ENCODE measurements at regions of chr6 and their contacts with region 1.

Region 1: DNA sequence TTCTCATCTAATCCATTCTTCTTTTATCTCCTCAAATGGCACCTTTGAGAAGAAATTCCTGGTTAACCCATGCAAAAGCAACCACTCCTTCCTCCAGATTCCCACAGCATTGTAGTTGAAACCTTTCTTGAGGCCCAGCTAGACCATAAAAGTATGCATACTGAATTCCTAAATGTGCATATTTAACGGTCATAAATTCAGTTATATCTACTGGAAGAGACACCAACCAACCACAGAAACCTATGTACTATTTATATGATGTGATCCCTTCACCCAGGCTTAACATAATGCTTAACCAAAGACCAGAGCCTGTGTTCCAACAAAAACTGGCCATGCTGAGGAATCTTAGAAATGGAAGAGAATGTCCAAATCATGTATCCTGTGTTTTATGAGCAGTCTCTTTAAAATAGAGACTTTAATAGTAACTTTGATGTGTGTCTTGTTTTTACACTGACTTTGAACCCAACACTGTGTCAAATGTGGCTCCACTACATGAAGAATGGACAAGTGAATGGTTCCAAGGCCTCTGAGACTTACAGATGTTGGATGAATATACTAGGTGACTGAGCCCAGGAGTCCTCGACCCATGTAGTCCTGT is 11.4 kb upstream of the TAF8 start:
- DNase-seq: no peak
- ATAC-seq: no peak
- H3K4me3 ChIP-seq: peak overlapping the region in 3 of 5 experiments; percentile 23 to 35 (median 30)
- H3K4me3 Mint-ChIP-seq: peak overlapping the region; percentile 74
- H3K27ac ChIP-seq: peak overlapping the region; percentile 22 to 79
- H3K27ac Mint-ChIP-seq: peak overlapping the region; percentile 92
- H3K4me1 ChIP-seq: peaks cover 37 to 48% of the 10 kb centered on the region in 2 donors
- H3K4me1 Mint-ChIP-seq: peaks cover 50% of the 10 kb centered on the region
- H3K27me3 ChIP-seq: no peaks in the 10 kb centered on the region
- H3K27me3 Mint-ChIP-seq: no peaks in the 10 kb centered on the region
- CTCF ChIP-seq: no peak

Region 2: DNA sequence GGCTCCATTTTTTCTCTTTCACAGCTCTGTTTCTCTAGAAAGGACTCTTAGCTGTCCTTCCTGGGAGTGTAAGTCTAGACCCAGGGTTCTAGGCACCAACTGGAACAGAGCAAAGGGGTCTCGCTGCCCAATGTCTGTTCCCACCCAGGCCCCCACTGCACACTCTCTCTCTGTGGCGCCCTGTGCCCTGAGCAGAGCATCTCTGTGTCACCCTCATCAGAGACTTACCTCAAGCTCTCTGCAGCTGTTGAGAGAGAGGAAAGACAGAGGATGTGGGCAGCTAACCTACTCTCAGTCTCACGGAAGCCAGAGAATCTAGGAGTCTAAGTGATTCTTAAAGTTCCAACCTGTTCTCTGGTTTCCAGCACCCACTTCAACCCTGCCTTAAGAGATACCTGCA is 694.0 kb before region 1 on chr6:
- CTCF ChIA-PET with region 1: no interaction called
- POLR2A ChIA-PET with region 1: no interaction called
- intact Hi-C with region 1: no loop called
- DNase-seq: no peak
- ATAC-seq: no peak
- H3K4me3 ChIP-seq: no peak overlapping the region
- H3K4me3 Mint-ChIP-seq: no peak overlapping the region
- H3K27ac ChIP-seq: no peak overlapping the region
- H3K27ac Mint-ChIP-seq: no peak overlapping the region
- H3K4me1 ChIP-seq: peaks cover 3 to 4% of the 10 kb centered on the region in 2 donors
- H3K4me1 Mint-ChIP-seq: peaks cover 4% of the 10 kb centered on the region
- H3K27me3 ChIP-seq: peaks cover 0 to 10% (median 7%) of the 10 kb centered on the region in 4 experiments
- H3K27me3 Mint-ChIP-seq: peaks cover 27% of the 10 kb centered on the region
- CTCF ChIP-seq: no peak

Region 3: GRCh38 chr6:41996997-41997396 is 41.9 kb before region 1 on chr6:
- CTCF ChIA-PET with region 1: interaction called, 10 read pairs
- POLR2A ChIA-PET with region 1: no interaction called
- intact Hi-C with region 1: no loop called
- DNase-seq: no peak
- ATAC-seq: no peak
- H3K4me3 ChIP-seq: no peak overlapping the region
- H3K4me3 Mint-ChIP-seq: no peak overlapping the region
- H3K27ac ChIP-seq: no peak overlapping the region
- H3K27ac Mint-ChIP-seq: peak overlapping the region; percentile 0
- H3K4me1 ChIP-seq: no peaks in the 10 kb centered on the region
- H3K4me1 Mint-ChIP-seq: peaks cover 10% of the 10 kb centered on the region
- H3K27me3 ChIP-seq: no peaks in the 10 kb centered on the region
- H3K27me3 Mint-ChIP-seq: no peaks in the 10 kb centered on the region
- CTCF ChIP-seq: no peak

Region 4: GRCh38 chr6:42104095-42104806 is 65.3 kb after region 1 on chr6:
- CTCF ChIA-PET with region 1: no interaction called
- POLR2A ChIA-PET with region 1: no interaction called
- intact Hi-C with region 1: no loop called
- DNase-seq: peak; percentile 81
- ATAC-seq: peak; percentile 73
- H3K4me3 ChIP-seq: peak overlapping the region; percentile 3 to 65 (median 47)
- H3K4me3 Mint-ChIP-seq: peak overlapping the region; percentile 75
- H3K27ac ChIP-seq: no peak overlapping the region
- H3K27ac Mint-ChIP-seq: peak overlapping the region; percentile 10
- H3K4me1 ChIP-seq: peaks cover 6 to 11% of the 10 kb centered on the region in 2 donors
- H3K4me1 Mint-ChIP-seq: peaks cover 8% of the 10 kb centered on the region
- H3K27me3 ChIP-seq: peaks cover 0 to 25% (median 2%) of the 10 kb centered on the region in 4 experiments
- H3K27me3 Mint-ChIP-seq: peaks cover 19% of the 10 kb centered on the region
- CTCF ChIP-seq: peak; percentile 90

Measured in B cell (primary cell).